ENCODE measurements at regions of chr16 and their contacts with region 1.

Region 1: DNA sequence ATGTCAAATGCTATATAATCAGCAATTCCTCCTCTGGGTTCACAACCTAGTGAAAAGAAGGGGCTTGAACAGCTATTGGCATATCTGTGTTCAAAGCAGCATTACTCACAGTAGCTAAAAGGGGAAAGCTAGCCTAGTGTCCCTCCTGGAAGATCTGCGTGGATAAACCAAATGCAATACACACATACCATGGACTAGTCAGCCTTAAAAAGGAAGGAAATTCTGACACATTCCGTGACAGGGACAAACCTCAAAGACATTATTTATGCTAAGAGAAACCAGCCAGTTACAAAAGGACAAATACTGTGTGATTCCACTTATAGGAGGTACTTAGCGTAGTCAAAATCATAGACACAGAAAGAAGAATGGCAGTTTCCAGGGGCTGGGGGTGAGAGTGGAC is 90.1 kb downstream of the XYLT1 start:
- DNase-seq: no peak
- ATAC-seq: no peak
- H3K4me3 ChIP-seq: no peak overlapping the region
- H3K4me3 Mint-ChIP-seq: no peak overlapping the region
- H3K27ac ChIP-seq: no peak overlapping the region
- H3K27ac Mint-ChIP-seq: no peak overlapping the region
- H3K4me1 ChIP-seq: peaks cover 25% of the 10 kb centered on the region
- H3K4me1 Mint-ChIP-seq: peaks cover 62% of the 10 kb centered on the region
- H3K27me3 ChIP-seq: no peaks in the 10 kb centered on the region
- H3K27me3 Mint-ChIP-seq: no peaks in the 10 kb centered on the region
- CTCF ChIP-seq: no peak

Region 2: GRCh38 chr16:17116595-17117296 is 263.9 kb before region 1 on chr16:
- CTCF ChIA-PET with region 1: no interaction called
- POLR2A ChIA-PET with region 1: no interaction called
- intact Hi-C with region 1: no loop called
- DNase-seq: no peak
- ATAC-seq: no peak
- H3K4me3 ChIP-seq: no peak overlapping the region
- H3K4me3 Mint-ChIP-seq: no peak overlapping the region
- H3K27ac ChIP-seq: no peak overlapping the region
- H3K27ac Mint-ChIP-seq: peak overlapping the region; percentile 12
- H3K4me1 ChIP-seq: no peaks in the 10 kb centered on the region
- H3K4me1 Mint-ChIP-seq: no peaks in the 10 kb centered on the region
- H3K27me3 ChIP-seq: no peaks in the 10 kb centered on the region
- H3K27me3 Mint-ChIP-seq: no peaks in the 10 kb centered on the region
- CTCF ChIP-seq: no peak

Region 3: GRCh38 chr16:17318238-17318637 is 62.4 kb before region 1 on chr16:
- CTCF ChIA-PET with region 1: no interaction called
- POLR2A ChIA-PET with region 1: no interaction called
- intact Hi-C with region 1: no loop called
- DNase-seq: no peak
- ATAC-seq: no peak
- H3K4me3 ChIP-seq: no peak overlapping the region
- H3K4me3 Mint-ChIP-seq: no peak overlapping the region
- H3K27ac ChIP-seq: no peak overlapping the region
- H3K27ac Mint-ChIP-seq: no peak overlapping the region
- H3K4me1 ChIP-seq: peaks cover 5% of the 10 kb centered on the region
- H3K4me1 Mint-ChIP-seq: peaks cover 25% of the 10 kb centered on the region
- H3K27me3 ChIP-seq: no peaks in the 10 kb centered on the region
- H3K27me3 Mint-ChIP-seq: no peaks in the 10 kb centered on the region
- CTCF ChIP-seq: no peak

Region 4: GRCh38 chr16:17343028-17343427 is 37.6 kb before region 1 on chr16:
- CTCF ChIA-PET with region 1: no interaction called
- POLR2A ChIA-PET with region 1: interaction called, 3 read pairs
- intact Hi-C with region 1: loop called in 1 of 2 experiments (anchors 5 kb)
- DNase-seq: peak; percentile 18 to 88 (median 50)
- ATAC-seq: peak; percentile 82
- H3K4me3 ChIP-seq: peak overlapping the region in 1 of 2 experiments; percentile 9
- H3K4me3 Mint-ChIP-seq: peak overlapping the region; percentile 38
- H3K27ac ChIP-seq: no peak overlapping the region
- H3K27ac Mint-ChIP-seq: peak overlapping the region; percentile 49
- H3K4me1 ChIP-seq: peaks cover 61% of the 10 kb centered on the region
- H3K4me1 Mint-ChIP-seq: peaks cover 66% of the 10 kb centered on the region
- H3K27me3 ChIP-seq: no peaks in the 10 kb centered on the region
- H3K27me3 Mint-ChIP-seq: no peaks in the 10 kb centered on the region
- CTCF ChIP-seq: no peak